SK-N-SH (cell line): ENCODE measurements at regions of chr2 and their contacts with region 1.

Region 1: GRCh38 chr2:161961061-161961460 is 113.0 kb downstream of the DPP4 start:
- DNase-seq: no peak
- H3K4me3 ChIP-seq: no peak overlapping the region
- H3K27ac ChIP-seq: no peak overlapping the region
- H3K4me1 ChIP-seq: no peaks in the 10 kb centered on the region
- H3K27me3 ChIP-seq: no peaks in the 10 kb centered on the region; the same call in 1 of the 2 replicates
- CTCF ChIP-seq: no peak
- EP300 ChIP-seq: no peak
- RAD21 ChIP-seq: no peak

Region 2: GRCh38 chr2:161946489-161947107 is 14.5 kb before region 1 on chr2:
- CTCF ChIA-PET with region 1: interaction called, 11 read pairs
- POLR2A ChIA-PET with region 1: no interaction called
- DNase-seq: no peak
- H3K4me3 ChIP-seq: no peak overlapping the region; a peak in 1 of 4 replicates
- H3K27ac ChIP-seq: no peak overlapping the region
- H3K4me1 ChIP-seq: no peaks in the 10 kb centered on the region
- H3K27me3 ChIP-seq: 0 out of 2 replicates have a peak, but pooled peaks cover 11% of the 10 kb centered on the region
- CTCF ChIP-seq: peak; percentile 71
- EP300 ChIP-seq: no peak
- RAD21 ChIP-seq: peak; percentile 68

Region 3: DNA sequence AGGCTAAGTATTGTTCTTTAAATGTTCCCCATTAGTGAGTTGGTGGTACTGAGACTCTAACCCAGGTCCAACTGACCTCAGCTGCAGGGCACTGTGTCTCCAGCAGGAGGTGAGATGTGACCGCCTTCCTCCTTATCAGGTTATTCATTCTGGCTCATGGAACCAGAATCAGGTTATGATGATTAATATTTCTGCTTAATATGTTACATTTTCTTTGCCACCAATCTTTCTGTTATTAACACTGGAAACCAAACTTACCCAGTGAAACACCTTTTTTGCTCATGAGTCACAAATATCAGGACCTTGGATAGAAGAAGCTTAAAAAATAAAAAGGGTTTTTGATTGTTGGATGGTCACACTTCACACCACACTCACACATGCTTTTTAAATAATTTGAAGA is 27.5 kb after region 1 on chr2:
- CTCF ChIA-PET with region 1: no interaction called
- POLR2A ChIA-PET with region 1: no interaction called
- DNase-seq: no peak
- H3K4me3 ChIP-seq: no peak overlapping the region
- H3K27ac ChIP-seq: no peak overlapping the region
- H3K4me1 ChIP-seq: no peaks in the 10 kb centered on the region; a peak in 1 of 4 replicates
- H3K27me3 ChIP-seq: no peaks in the 10 kb centered on the region
- CTCF ChIP-seq: peak; percentile 41
- EP300 ChIP-seq: no peak
- RAD21 ChIP-seq: no peak